Panc1 (cell line): ENCODE measurements at regions of chr6 and their contacts with region 1.

Region 1: DNA sequence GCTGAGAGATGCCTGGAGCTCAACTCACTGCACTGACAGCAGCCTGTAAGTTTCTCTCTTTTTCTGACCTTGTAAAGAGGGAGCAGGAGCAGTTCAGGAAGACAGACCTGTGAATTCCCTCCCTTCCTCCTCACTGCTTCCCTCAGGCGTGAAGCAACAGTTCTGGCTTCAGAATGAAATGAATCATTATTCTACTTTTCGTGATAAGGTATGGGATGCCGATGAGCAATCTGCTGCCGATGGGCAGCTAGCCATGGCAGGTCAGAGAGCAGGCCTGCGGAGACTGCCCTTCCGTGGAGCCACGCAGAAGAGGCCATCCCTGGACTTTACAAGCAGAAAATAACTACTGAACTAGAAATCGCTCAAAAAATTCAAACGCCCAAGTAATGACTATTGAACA is 426.5 kb upstream of the RNF217 start:
- DNase-seq: peak; percentile 89
- ATAC-seq: peak; percentile 91
- H3K4me3 ChIP-seq: peak overlapping the region in 1 of 2 experiments; percentile 40; a peak in 3 of 4 replicates
- H3K27ac ChIP-seq: peak overlapping the region; percentile 99
- H3K4me1 ChIP-seq: peaks cover 35% of the 10 kb centered on the region
- H3K27me3 ChIP-seq: no peaks in the 10 kb centered on the region
- CTCF ChIP-seq: no peak

Region 2: DNA sequence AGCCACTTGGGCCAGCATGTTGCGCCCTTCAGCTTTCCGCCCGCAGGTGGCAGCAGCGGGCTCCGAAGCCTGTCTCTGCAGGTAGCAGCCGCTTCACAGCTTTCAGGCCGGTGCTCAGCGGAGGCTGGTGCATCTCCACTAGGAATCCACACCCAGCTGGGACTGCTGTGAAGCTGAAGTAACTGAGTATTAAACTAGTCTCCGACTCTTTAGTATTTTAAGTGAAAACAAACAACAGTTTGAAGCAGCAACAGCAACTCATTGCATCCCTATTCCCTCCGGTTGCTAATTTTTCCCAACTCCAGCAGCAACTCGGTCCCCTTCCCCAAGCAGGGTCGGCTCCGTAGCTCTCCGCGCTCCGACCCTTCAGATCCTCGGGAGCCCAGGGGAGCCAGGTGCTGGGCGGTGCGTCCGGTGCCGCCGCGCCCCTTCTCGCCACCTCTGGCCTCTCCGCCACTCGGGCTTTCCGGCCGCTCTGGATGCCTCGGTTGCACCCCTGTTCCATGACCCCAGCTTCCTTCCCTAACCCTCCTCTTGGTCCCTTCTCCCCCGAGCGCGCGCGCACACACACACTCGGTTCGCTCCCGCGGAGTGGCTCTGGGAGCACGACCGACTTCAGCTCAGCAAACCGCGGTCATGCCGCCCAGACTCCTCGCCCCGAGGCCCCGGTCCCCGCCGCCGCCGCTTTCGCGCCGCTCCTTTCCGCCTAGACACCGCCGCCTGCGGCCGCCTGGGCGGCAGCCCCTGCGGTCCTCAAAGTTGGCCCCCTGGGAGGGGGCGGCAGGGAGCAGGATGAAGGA is 732.9 kb before region 1 on chr6:
- CTCF ChIA-PET with region 1: no interaction called
- POLR2A ChIA-PET with region 1: no interaction called
- in situ Hi-C with region 1: no loop called
- intact Hi-C with region 1: loop called (anchors 2 kb)
- DNase-seq: peak; percentile 65
- ATAC-seq: peak; percentile 91
- H3K4me3 ChIP-seq: peak overlapping the region; percentile 79
- H3K27ac ChIP-seq: peak overlapping the region; percentile 87
- H3K4me1 ChIP-seq: peaks cover 26% of the 10 kb centered on the region
- H3K27me3 ChIP-seq: no peaks in the 10 kb centered on the region
- CTCF ChIP-seq: peak; percentile 98

Region 3: DNA sequence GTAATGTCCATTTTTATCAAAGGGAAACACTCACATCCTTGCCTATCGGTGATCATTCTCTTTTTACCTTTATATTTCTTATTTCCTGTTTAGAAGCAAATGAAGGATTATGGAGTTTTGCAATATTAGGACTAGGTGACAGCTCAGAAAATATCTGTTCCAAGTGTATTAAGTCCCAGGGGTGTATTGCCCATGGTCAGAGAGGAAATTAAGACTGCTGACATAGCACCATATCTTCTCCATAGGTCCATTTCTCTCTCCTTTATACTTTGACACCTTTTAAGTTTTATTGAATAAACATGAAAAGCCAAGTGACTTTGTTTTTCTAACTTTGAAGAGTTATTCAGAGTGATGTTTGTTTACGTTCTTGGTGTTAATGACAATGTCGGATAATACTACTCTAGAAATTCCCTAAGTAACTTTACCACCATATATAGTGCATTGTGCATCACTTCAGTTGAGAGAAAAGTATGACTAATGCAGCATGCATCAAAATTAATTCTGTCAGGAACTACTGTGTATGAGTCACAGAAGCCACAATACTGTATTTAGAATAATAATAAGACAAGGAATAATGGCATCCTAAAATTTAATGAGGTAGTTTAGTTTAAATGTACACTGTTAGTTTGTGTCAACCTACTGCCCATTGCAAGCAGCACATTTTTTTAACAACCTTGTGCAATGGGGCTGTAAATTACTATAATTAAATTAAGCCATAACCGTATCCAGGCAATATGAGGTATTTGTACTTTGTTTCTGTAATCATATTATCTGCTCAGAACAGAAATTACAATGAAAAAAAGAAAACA is 47.9 kb before region 1 on chr6:
- CTCF ChIA-PET with region 1: no interaction called
- POLR2A ChIA-PET with region 1: no interaction called
- in situ Hi-C with region 1: no loop called
- intact Hi-C with region 1: loop called (anchors 5 kb)
- DNase-seq: peak; percentile 65
- ATAC-seq: peak; percentile 98
- H3K4me3 ChIP-seq: no peak overlapping the region
- H3K27ac ChIP-seq: peak overlapping the region; percentile 71
- H3K4me1 ChIP-seq: no peaks in the 10 kb centered on the region
- H3K27me3 ChIP-seq: no peaks in the 10 kb centered on the region
- CTCF ChIP-seq: no peak

Region 4: GRCh38 chr6:124694139-124694782 is 158.5 kb after region 1 on chr6:
- CTCF ChIA-PET with region 1: no interaction called
- POLR2A ChIA-PET with region 1: no interaction called
- in situ Hi-C with region 1: no loop called
- intact Hi-C with region 1: no loop called
- DNase-seq: no peak
- ATAC-seq: no peak
- H3K4me3 ChIP-seq: no peak overlapping the region
- H3K27ac ChIP-seq: no peak overlapping the region
- H3K4me1 ChIP-seq: no peaks in the 10 kb centered on the region
- H3K27me3 ChIP-seq: no peaks in the 10 kb centered on the region
- CTCF ChIP-seq: no peak